ENCODE measurements at regions of chr2 and their contacts with region 1.

Region 1: GRCh38 chr2:85437488-85438284 is 19.2 kb downstream of the SH2D6 start:
- DNase-seq: peak; percentile 88 to 95 (median 92)
- ATAC-seq: peak; percentile 59 to 83 (median 80)
- H3K4me3 ChIP-seq: peak overlapping the region in 11 of 12 donors; percentile 10 to 59 (median 54)
- H3K27ac ChIP-seq: peak overlapping the region; percentile 91 to 99 (median 95)
- H3K4me1 ChIP-seq: peaks cover 16 to 64% (median 39%) of the 10 kb centered on the region in 12 donors
- H3K27me3 ChIP-seq: no peaks in the 10 kb centered on the region
- CTCF ChIP-seq: peak in 1 of 12 donors; percentile 7
- POLR2A ChIP-seq: peak; percentile 25 to 88

Region 2: DNA sequence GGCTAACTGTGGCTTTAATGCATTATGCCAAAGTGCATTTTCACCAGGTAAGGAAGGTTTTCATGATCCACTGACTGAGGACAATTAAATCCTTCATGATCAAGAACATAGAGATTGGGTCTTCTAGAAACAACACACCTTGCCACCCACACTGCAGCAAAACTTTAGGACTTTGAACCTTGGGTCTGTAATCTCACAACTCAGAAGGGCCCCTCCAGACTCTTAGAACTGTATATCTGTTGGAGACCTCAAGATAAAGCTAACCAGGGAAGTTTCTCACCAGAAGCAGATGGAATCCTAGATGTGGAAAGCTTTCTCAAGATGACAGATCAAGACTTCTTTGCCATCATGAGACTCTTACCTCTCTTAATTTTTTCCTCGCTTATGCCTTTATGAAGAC is 58.8 kb after region 1 on chr2:
- intact Hi-C with region 1: loop called in 2 of 10 experiments (anchors 5 to 10 kb)
- DNase-seq: no peak
- ATAC-seq: no peak
- H3K4me3 ChIP-seq: no peak overlapping the region
- H3K27ac ChIP-seq: no peak overlapping the region
- H3K4me1 ChIP-seq: peaks cover 0 to 36% (median 21%) of the 10 kb centered on the region in 12 donors
- H3K27me3 ChIP-seq: no peaks in the 10 kb centered on the region
- CTCF ChIP-seq: no peak
- POLR2A ChIP-seq: no peak

Region 3: GRCh38 chr2:85538486-85539360 is 101.0 kb after region 1 on chr2 and contains the start of gene MAT2A:
- intact Hi-C with region 1: loop called in 8 of 10 experiments (anchors 1 to 5 kb)
- DNase-seq: peak; percentile 95 to 96 (median 96)
- ATAC-seq: peak; percentile 87 to 90 (median 89)
- H3K4me3 ChIP-seq: peak within 1 kb of the TSS; percentile 59 to 98 (median 90)
- H3K27ac ChIP-seq: peak within 1 kb of the TSS; percentile 94 to 100 (median 99)
- H3K4me1 ChIP-seq: peaks cover 0 to 55% (median 38%) of the 10 kb centered on the region in 12 donors
- H3K27me3 ChIP-seq: no peaks in the 10 kb centered on the region
- CTCF ChIP-seq: peak; percentile 55 to 91 (median 80)
- POLR2A ChIP-seq: peak in 1 of 2 donors; percentile 98
- total RNA-seq, gene MAT2A: 66.0 to 218 (median 128) TPM